Posterior vena cava (tissue), 2 donors: ENCODE measurements at regions of chr11 and their contacts with region 1.

Region 1: DNA sequence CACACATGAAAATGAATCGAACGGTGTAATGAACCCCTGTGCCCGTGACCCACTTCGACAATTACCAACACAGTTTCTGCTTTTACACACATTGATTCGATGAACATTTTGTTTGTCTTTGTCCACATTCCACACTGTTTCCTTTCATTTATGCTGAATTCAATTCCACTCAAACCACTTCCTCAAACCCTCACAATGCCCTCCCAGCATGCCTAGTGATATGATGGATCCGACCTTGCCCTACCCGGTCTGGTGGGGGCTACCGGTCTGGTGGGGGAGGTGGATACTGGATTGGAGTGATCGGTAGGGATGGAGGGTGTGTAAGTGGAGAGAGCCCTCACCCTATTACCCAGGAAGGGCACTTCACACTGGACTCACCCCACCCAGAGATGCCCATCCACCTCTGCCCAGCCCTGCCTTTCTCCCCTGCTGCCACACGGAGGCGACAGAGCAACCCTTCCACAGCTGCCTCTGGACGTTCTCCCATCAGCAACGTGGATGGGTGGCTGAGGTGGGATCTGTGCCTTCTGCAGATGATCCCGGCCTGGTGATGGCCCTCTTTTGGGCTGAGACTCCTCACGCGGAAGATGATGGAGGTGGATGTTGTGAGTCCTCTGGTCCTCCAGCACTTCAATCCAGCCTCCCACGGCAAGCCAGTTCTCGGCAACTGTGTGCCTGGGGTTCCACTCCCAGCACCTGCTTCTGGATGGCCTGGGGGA is 33.0 kb upstream of the P2RY2 start:
- DNase-seq: peak; percentile 90

Region 2: GRCh38 chr11:73236854-73237253 is 51.7 kb after region 1 on chr11:
- intact Hi-C with region 1: loop called (anchors 1 to 5 kb)
- DNase-seq: peak; percentile 71

Region 3: DNA sequence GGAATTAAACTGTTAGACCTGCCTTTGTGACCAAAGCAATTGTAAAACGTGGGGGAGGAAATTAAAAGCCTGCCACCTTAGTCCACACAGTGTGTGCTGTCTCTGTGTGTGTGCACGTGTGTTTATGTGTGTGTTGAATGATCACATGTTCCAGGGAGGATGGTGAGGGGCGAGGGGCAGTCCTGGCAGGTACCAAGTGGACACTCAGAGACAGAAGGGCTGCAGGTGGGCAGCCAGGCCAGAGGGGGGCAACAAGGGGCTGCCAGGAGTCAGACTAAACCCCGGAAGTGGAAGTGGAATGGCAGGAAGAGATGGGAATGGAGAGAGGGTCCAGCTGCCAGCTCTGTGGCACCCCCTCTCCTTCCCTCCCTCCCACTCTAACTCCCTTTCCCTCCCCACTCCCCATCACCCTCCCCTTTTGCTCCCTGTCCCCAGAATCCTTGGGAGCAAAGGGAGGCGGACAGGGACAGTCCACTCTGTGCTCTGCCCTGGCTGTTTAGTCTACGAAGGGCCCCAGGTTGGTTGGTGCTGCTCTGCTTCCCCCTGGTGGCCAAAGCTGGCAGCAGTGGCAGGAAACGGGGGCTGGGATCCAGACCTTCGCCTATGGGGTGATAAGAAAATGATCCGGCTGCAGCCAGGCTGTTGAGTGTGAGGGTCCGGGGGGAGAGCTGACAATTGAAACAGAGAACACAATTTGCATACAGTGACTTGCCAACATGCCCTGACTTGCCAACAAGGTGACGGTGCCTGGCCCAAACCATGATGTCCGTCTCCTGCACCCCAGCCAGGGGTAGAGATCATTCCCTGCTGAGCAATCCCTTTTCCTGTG is 57.4 kb after region 1 on chr11:
- intact Hi-C with region 1: loop called in 1 of 2 experiments (anchors 5 kb)
- DNase-seq: peak; percentile 88

Region 4: DNA sequence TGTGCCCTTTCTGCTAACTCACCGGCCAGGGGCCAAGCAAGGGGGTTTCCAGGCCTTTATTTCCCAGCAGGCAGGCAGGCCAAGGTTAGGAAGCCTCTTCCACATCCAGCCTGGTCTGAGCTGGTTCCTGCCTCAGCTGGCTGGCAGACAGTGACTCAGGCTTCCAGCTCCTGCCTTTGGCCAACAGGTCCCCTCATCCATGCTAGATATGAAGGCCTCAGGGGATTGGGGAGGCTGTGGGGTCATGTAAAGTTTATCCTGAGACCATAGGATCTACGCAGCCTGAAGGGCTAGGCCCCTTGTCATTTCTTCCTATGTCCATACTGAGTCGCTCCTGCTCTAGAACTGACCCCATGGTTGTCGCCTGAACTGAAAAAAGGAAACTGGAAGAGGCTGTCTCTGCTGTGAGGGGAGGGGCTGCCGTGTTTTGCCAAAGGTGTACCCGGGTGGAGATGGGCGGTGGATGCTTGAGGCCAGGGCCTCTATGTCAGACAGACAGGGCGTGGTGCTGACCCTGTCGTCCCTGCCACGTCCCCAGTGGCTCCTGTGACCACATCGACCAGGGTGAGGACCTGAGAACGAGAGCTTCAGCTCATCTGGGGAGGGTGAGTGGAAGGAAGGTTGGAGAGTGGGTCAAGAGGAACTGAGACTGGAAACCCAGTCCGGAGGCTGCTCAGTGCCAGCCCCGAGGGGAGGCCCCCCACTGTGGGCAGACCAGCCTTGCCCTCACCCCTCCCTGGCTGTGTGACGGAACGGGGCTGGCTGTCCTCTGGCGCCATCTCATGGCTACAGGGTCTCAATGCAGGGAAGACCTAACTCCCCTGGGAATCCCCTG is 104.0 kb after region 1 on chr11:
- intact Hi-C with region 1: loop called (anchors 5 to 10 kb)
- DNase-seq: peak; percentile 94